Heart right ventricle (tissue), 16 donors: ENCODE measurements at regions of chr15 and their contacts with region 1.

Region 1: GRCh38 chr15:83262594-83263315 is 21.7 kb downstream of the BNC1 start:
- DNase-seq: no peak
- ATAC-seq: no peak
- H3K4me3 ChIP-seq: no peak overlapping the region
- H3K27ac ChIP-seq: no peak overlapping the region
- H3K4me1 ChIP-seq: no peaks in the 10 kb centered on the region
- H3K27me3 ChIP-seq: peaks cover 0 to 11% (median 3%) of the 10 kb centered on the region in 7 donors
- CTCF ChIP-seq: no peak

Region 2: DNA sequence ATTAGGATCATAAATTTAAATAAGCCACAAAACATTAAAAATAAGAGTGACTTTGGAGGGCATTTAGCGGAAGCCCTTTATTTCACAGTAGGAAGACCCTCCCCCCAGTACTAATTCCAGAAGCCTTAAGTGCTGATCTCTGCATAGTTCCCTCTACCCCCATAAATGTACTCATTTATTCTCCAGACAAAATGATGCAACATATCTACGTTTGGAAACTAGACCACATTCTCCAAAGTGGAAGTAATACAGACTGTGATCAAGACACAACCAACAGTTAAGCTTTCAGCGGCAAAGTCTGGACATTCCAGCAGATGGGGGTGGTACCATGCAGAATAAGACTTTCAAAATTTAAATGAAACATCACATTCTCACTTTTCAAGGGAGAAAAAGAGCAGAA is 677.7 kb before region 1 on chr15:
- intact Hi-C with region 1: loop called in 1 of 10 experiments (anchors 5 kb)
- DNase-seq: no peak
- ATAC-seq: no peak
- H3K4me3 ChIP-seq: no peak overlapping the region
- H3K27ac ChIP-seq: no peak overlapping the region
- H3K4me1 ChIP-seq: no peaks in the 10 kb centered on the region
- H3K27me3 ChIP-seq: peaks cover 0 to 28% (median 15%) of the 10 kb centered on the region in 7 donors
- CTCF ChIP-seq: peak in 1 of 9 donors; percentile 9

Region 3: DNA sequence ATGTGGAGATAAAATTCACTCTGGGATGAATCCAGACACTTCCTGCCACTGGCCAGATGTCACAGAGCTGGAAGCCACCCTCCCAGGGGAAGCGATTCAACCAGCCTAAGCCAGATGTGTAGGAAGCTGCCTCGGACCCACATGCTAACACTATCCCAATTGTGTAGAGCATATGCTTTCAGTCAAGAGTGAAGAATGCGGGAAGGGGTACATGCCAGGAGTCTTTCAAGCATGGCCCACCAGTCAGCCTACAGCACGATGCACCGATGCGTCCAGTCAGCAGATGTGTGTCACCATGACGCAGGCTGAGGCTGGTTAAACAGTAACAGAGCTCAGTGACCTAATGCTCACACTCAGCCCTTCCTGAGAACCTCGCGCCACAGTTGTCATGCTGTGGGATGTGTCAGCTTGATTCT is 60.5 kb after region 1 on chr15:
- intact Hi-C with region 1: loop called in 1 of 10 experiments (anchors 10 kb)
- DNase-seq: peak in 1 of 2 donors; percentile 13
- ATAC-seq: peak in 6 of 8 donors; percentile 14 to 62 (median 56)
- H3K4me3 ChIP-seq: no peak overlapping the region
- H3K27ac ChIP-seq: no peak overlapping the region
- H3K4me1 ChIP-seq: no peaks in the 10 kb centered on the region
- H3K27me3 ChIP-seq: peaks cover 0 to 25% (median 4%) of the 10 kb centered on the region in 7 donors
- CTCF ChIP-seq: no peak

Region 4: GRCh38 chr15:83538682-83539081 is 275.9 kb after region 1 on chr15:
- intact Hi-C with region 1: loop called in 1 of 10 experiments (anchors 10 kb)
- DNase-seq: no peak
- ATAC-seq: no peak
- H3K4me3 ChIP-seq: no peak overlapping the region
- H3K27ac ChIP-seq: no peak overlapping the region
- H3K4me1 ChIP-seq: no peaks in the 10 kb centered on the region
- H3K27me3 ChIP-seq: peaks cover 0 to 3% (median 0%) of the 10 kb centered on the region in 7 donors
- CTCF ChIP-seq: no peak